ENCODE measurements at regions of chr17 and their contacts with region 1.

Region 1: DNA sequence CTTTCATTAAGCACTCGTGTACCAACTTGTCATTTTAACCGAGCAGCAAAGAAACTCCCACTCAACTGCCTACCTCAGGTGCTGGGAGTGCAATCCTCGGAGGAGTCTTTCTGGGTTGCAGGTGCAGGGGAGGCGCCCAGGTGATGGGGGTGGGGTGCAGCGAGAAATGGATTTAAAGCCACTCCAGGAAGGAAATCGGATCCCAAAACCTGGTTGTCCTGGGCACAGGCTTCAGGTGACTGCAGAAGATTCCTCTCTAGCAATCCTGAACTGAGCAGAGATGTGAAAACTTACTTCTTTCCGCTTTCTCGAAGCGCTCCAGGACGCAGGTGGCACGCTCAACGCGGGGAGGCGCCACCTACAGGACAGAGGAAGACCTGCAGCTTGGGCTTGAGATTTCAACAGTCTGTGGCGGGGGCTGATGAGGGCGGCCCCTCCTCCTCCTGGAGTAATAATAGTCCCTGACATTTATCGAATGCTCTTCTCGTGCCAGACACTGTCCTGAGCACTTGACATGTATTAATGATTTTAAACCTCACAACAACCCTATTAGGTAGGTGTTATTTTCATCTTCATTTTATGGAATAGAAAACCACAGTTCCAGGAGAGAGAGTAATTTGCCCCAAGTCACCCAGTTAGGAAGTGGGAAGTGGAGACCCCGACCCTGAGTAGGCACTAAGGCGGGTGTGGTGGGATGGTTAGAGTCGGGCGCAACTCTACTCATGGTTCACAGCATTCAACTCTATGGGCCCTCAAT is 27.2 kb upstream of the SKAP1 start:
- DNase-seq: peak; percentile 86
- ATAC-seq: peak; percentile 81
- H3K4me3 Mint-ChIP-seq: peak overlapping the region; percentile 49
- H3K27ac Mint-ChIP-seq: peak overlapping the region; percentile 7
- H3K4me1 Mint-ChIP-seq: peaks cover 54% of the 10 kb centered on the region
- H3K27me3 Mint-ChIP-seq: no peaks in the 10 kb centered on the region
- CTCF ChIP-seq: peak; percentile 98

Region 2: GRCh38 chr17:48335858-48336500 is 121.3 kb before region 1 on chr17:
- CTCF ChIA-PET with region 1: interaction called, 16 read pairs
- POLR2A ChIA-PET with region 1: interaction called, 3 read pairs
- intact Hi-C with region 1: no loop called
- DNase-seq: no peak
- ATAC-seq: peak; percentile 61
- H3K4me3 Mint-ChIP-seq: no peak overlapping the region
- H3K27ac Mint-ChIP-seq: no peak overlapping the region
- H3K4me1 Mint-ChIP-seq: peaks cover 13% of the 10 kb centered on the region
- H3K27me3 Mint-ChIP-seq: no peaks in the 10 kb centered on the region
- CTCF ChIP-seq: peak; percentile 81

Region 3: GRCh38 chr17:48374650-48375230 is 82.5 kb before region 1 on chr17:
- CTCF ChIA-PET with region 1: interaction called, 10 read pairs
- POLR2A ChIA-PET with region 1: no interaction called
- intact Hi-C with region 1: no loop called
- DNase-seq: peak; percentile 50
- ATAC-seq: peak; percentile 71
- H3K4me3 Mint-ChIP-seq: no peak overlapping the region
- H3K27ac Mint-ChIP-seq: no peak overlapping the region
- H3K4me1 Mint-ChIP-seq: peaks cover 26% of the 10 kb centered on the region
- H3K27me3 Mint-ChIP-seq: no peaks in the 10 kb centered on the region
- CTCF ChIP-seq: peak; percentile 58

Region 4: GRCh38 chr17:48392857-48393256 is 64.4 kb before region 1 on chr17:
- CTCF ChIA-PET with region 1: interaction called, 16 read pairs
- POLR2A ChIA-PET with region 1: no interaction called
- intact Hi-C with region 1: no loop called
- DNase-seq: no peak
- ATAC-seq: no peak
- H3K4me3 Mint-ChIP-seq: no peak overlapping the region
- H3K27ac Mint-ChIP-seq: no peak overlapping the region
- H3K4me1 Mint-ChIP-seq: peaks cover 49% of the 10 kb centered on the region
- H3K27me3 Mint-ChIP-seq: no peaks in the 10 kb centered on the region
- CTCF ChIP-seq: no peak

Region 5: GRCh38 chr17:48413613-48414405 is 43.4 kb before region 1 on chr17:
- CTCF ChIA-PET with region 1: interaction called, 7 read pairs
- POLR2A ChIA-PET with region 1: interaction called, 3 read pairs
- intact Hi-C with region 1: loop called (anchors 5 kb)
- DNase-seq: no peak
- ATAC-seq: peak; percentile 49
- H3K4me3 Mint-ChIP-seq: peak overlapping the region; percentile 16
- H3K27ac Mint-ChIP-seq: peak overlapping the region; percentile 91
- H3K4me1 Mint-ChIP-seq: peaks cover 82% of the 10 kb centered on the region
- H3K27me3 Mint-ChIP-seq: no peaks in the 10 kb centered on the region
- CTCF ChIP-seq: no peak

Region 6: GRCh38 chr17:48441231-48441711 is 16.0 kb before region 1 on chr17:
- CTCF ChIA-PET with region 1: interaction called, 28 read pairs
- POLR2A ChIA-PET with region 1: interaction called, 58 read pairs
- intact Hi-C with region 1: no loop called
- DNase-seq: peak; percentile 60
- ATAC-seq: peak; percentile 63
- H3K4me3 Mint-ChIP-seq: peak overlapping the region; percentile 50
- H3K27ac Mint-ChIP-seq: peak overlapping the region; percentile 97
- H3K4me1 Mint-ChIP-seq: peaks cover 90% of the 10 kb centered on the region
- H3K27me3 Mint-ChIP-seq: no peaks in the 10 kb centered on the region
- CTCF ChIP-seq: no peak

Region 7: GRCh38 chr17:48571024-48571818 is 114.0 kb after region 1 on chr17:
- CTCF ChIA-PET with region 1: no interaction called
- POLR2A ChIA-PET with region 1: no interaction called
- intact Hi-C with region 1: no loop called
- DNase-seq: no peak
- ATAC-seq: no peak
- H3K4me3 Mint-ChIP-seq: no peak overlapping the region
- H3K27ac Mint-ChIP-seq: no peak overlapping the region
- H3K4me1 Mint-ChIP-seq: peaks cover 6% of the 10 kb centered on the region
- H3K27me3 Mint-ChIP-seq: peaks cover 5% of the 10 kb centered on the region
- CTCF ChIP-seq: no peak